ENCODE measurements at regions of chr4 and their contacts with region 1.

Region 1: GRCh38 chr4:105666693-105667092 is 41.8 kb downstream of the INTS12 start:
- DNase-seq: no peak
- ATAC-seq: peak; percentile 80

Region 2: DNA sequence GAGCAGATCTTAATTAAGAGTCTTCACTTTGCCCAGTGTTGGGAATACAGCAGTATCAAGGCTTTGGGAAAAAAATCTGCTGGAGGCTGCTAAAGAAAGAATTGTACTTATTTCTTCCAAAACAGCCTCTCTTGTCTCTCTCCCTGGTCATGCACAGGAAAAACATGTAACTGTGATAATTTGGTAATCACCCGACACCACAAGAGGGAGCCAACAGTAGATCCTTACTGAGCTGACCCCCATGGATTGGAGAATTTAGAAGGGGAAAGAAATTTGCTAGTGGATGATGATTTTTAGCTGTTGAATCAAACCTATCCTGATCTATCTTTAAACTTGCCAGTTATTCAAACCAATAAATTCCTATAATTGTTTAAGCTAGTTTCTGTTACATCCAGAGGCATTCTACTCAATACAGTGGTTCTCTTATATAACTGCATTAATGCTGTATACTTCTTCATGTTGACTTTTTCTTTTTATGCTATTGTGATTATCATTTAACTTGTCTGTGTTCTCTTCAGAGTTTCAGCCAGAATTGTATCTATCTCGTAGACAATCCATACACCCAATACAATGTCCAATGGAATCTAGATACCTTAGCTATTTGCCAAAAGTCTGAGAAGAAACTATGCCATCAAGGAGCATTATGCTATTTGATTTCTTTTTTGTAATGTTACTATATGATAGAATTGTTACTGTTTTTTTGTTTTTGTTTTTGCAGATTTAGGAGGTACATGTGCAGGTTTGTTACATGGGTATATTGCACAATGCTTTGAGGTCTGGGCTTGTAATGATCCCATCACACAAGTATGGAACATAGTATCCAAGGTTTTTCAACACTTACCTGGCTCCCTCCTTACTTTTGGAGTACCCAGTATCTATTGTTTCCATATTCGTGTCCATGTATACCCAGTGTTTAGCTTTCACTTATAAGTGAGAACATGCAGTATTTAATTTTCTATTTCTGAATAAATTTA is 145.6 kb before region 1 on chr4:
- intact Hi-C with region 1: loop called (anchors 10 kb)
- DNase-seq: no peak
- ATAC-seq: peak; percentile 65

Region 3: GRCh38 chr4:105605493-105605892 is 61.2 kb before region 1 on chr4:
- intact Hi-C with region 1: no loop called
- DNase-seq: no peak
- ATAC-seq: no peak